H1 (cell line): ENCODE measurements at regions of chr3 and their contacts with region 1.

Region 1: GRCh38 chr3:141050576-141051442 is at the start of gene SPSB4:
- DNase-seq: peak; percentile 63 to 90
- H3K4me3 ChIP-seq: peak within 1 kb of the TSS; percentile 64 to 92 (median 84)
- H3K27ac ChIP-seq: peak within 1 kb of the TSS; percentile 42; the same call in 1 of the 2 replicates
- H3K4me1 ChIP-seq: peaks cover 0 to 18% (median 5%) of the 10 kb centered on the region in 4 experiments; a peak in 5 of 7 replicates
- H3K27me3 ChIP-seq: peaks cover 0 to 36% (median 12%) of the 10 kb centered on the region in 4 experiments; a peak in 5 of 7 replicates
- CTCF ChIP-seq: peak; percentile 38 to 69 (median 58)
- EP300 ChIP-seq: no peak
- POLR2A ChIP-seq: no peak; a peak in 1 of 3 replicates
- RAD21 ChIP-seq: peak; percentile 37 to 73; a peak in 3 of 4 replicates
- total RNA-seq, gene SPSB4: 17.2 and 18.1 TPM in 2 replicates

Region 2: DNA sequence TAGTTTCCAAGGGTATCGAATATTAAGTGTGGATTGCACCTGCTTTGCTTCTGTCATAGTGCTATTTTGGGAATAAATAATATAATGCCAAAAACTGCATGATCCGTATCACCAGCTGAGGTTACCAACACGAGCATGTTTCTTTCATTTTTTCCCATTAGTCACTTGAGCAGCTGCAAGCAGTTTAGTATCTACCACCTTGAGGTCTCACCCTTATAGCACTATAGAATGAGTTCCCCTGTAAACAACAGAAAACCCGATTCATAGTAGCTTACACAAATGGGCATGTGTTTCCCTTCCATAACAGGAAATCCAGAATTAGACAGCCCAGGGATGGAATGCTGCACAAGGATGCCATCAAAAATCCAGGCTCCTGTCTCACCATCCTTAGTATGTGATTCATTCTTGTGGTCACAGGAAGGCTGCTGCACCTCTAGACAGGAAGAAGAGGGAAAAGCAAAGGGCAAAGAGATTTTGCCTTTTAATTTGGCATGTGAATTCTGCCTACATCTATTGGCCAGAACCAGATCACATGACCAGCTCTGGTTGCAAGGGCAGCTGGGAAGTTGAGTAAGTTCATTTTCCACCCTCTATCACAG is 200.5 kb before region 1 on chr3:
- CTCF ChIA-PET with region 1: no interaction called
- POLR2A ChIA-PET with region 1: no interaction called
- DNase-seq: no peak
- H3K4me3 ChIP-seq: no peak overlapping the region
- H3K27ac ChIP-seq: no peak overlapping the region
- H3K4me1 ChIP-seq: no peaks in the 10 kb centered on the region
- H3K27me3 ChIP-seq: peaks cover 0 to 2% (median 0%) of the 10 kb centered on the region in 4 experiments; a peak in 1 of 7 replicates
- CTCF ChIP-seq: no peak
- EP300 ChIP-seq: no peak
- POLR2A ChIP-seq: no peak
- RAD21 ChIP-seq: no peak

Region 3: DNA sequence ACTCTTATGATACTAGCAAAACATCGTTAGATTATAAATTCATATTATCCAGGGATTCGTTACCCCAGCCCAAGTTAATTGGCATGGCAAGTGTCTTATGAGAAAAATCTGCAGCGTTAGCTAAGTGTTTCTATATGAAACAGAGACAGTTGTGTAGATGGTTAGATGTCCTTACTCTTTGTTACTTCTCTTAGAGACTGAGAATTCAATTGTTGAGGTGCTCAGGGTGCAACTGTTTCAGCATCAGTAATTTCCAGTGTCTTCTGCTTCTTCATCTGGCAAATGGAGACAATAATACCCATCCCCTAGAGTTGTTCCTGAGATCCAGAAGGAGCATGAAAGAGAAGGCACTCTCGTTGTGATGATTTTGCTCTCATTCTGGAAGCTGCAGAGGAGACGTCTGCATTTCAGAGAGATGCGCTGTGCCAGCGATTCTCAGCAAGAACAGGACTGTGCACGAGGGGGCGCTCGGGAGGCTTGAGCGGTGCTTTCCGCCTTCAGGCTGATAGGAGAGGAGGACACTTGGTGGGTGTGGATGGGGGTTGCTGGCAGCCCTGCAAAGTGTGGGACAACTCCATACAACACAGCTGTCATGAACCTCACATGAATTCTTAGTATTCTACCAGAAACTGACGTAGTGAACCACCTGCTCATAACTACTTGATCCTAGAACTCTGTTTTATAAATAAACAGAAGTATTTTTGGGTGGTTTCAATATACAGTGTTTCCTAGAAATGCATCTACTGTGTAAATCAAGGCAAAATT is 39.4 kb before region 1 on chr3:
- CTCF ChIA-PET with region 1: interaction called, 123 read pairs
- POLR2A ChIA-PET with region 1: interaction called, 3 read pairs
- DNase-seq: peak; percentile 66 to 98
- H3K4me3 ChIP-seq: no peak overlapping the region
- H3K27ac ChIP-seq: no peak overlapping the region
- H3K4me1 ChIP-seq: peaks cover 0 to 11% (median 0%) of the 10 kb centered on the region in 4 experiments; a peak in 2 of 7 replicates
- H3K27me3 ChIP-seq: peaks cover 0 to 2% (median 0%) of the 10 kb centered on the region in 4 experiments; a peak in 1 of 7 replicates
- CTCF ChIP-seq: peak; percentile 91 to 98 (median 96)
- EP300 ChIP-seq: no peak
- POLR2A ChIP-seq: no peak
- RAD21 ChIP-seq: peak; percentile 91 to 94

Region 4: DNA sequence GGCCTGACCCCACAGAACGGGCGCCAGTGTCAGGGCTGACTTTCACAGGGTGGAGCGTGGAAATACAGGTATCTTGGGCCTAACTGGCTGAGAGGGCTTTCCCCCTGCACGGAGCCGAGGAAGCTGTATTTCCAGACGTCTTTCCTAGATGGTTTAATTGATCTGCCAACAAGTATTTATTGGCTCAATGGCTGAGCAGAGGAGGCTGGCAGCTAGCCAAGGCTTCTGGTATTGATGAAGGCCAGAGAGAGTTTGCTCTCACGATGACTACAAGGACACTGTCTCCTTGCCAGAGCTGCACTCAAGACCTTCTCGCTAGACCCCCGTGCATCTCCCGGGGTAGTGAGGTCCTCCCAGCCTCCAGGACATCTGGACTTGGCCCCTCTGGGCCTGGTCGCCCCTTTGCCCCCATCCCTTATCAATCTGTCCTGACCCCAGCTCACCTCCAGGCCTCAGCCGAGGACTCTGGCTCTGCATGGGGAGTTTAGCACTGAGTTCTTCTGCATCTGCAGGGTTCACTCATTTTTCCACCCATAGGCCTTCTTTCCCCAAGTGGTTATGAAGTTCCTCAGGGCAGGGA is 21.0 kb after region 1 on chr3:
- CTCF ChIA-PET with region 1: interaction called, 333 read pairs
- POLR2A ChIA-PET with region 1: interaction called, 22 read pairs
- DNase-seq: no peak
- H3K4me3 ChIP-seq: peak overlapping the region in 3 of 4 experiments; percentile 0 to 6 (median 2); a peak in 2 of 8 replicates
- H3K27ac ChIP-seq: no peak overlapping the region
- H3K4me1 ChIP-seq: peaks cover 35 to 60% (median 49%) of the 10 kb centered on the region in 4 experiments
- H3K27me3 ChIP-seq: peaks cover 0 to 18% (median 8%) of the 10 kb centered on the region in 4 experiments; a peak in 4 of 7 replicates
- CTCF ChIP-seq: no peak
- EP300 ChIP-seq: no peak
- POLR2A ChIP-seq: no peak
- RAD21 ChIP-seq: no peak

Region 5: GRCh38 chr3:141094790-141095545 is 44.2 kb after region 1 on chr3:
- CTCF ChIA-PET with region 1: interaction called, 333 read pairs
- POLR2A ChIA-PET with region 1: interaction called, 4 read pairs
- DNase-seq: no peak
- H3K4me3 ChIP-seq: no peak overlapping the region
- H3K27ac ChIP-seq: no peak overlapping the region
- H3K4me1 ChIP-seq: peaks cover 4 to 22% (median 9%) of the 10 kb centered on the region in 4 experiments
- H3K27me3 ChIP-seq: no peaks in the 10 kb centered on the region
- CTCF ChIP-seq: no peak
- EP300 ChIP-seq: no peak
- POLR2A ChIP-seq: no peak
- RAD21 ChIP-seq: no peak

Region 6: DNA sequence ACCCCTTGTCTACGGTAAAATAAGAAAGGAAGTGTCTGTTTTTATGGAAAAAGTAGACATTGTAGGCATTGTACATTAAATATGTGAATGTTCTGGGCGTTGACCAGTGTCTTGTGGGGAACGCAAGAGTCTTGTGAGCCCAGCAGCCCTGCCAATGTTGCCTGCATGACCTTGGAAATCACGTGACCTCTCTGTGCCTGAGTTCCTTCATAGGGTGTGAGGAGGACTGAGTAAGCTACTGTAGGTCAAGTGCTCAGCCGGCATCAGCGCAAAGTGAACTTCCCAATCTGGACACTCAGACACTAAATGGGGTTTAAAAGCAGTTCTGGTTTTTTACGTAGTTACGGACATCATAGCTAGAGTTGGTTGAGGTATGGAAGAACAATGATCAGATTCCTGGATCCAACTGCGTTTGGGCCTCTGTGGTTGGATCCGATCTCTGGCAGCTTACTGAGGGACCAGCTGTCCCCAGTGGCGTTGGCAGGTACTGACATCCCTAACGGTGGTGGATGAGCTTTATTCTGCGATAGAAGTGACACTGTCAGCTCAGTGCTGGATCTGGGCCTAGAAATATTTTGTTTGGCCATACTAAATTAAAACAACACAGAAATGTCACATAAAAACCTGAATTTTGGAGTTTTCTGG is 64.1 kb after region 1 on chr3:
- CTCF ChIA-PET with region 1: interaction called, 119 read pairs
- POLR2A ChIA-PET with region 1: interaction called, 7 read pairs
- DNase-seq: peak in 1 of 2 experiments; percentile 65
- H3K4me3 ChIP-seq: no peak overlapping the region
- H3K27ac ChIP-seq: no peak overlapping the region
- H3K4me1 ChIP-seq: no peaks in the 10 kb centered on the region
- H3K27me3 ChIP-seq: no peaks in the 10 kb centered on the region
- CTCF ChIP-seq: peak; percentile 65 to 81 (median 80)
- EP300 ChIP-seq: no peak
- POLR2A ChIP-seq: no peak
- RAD21 ChIP-seq: peak; percentile 55 to 70

Region 7: DNA sequence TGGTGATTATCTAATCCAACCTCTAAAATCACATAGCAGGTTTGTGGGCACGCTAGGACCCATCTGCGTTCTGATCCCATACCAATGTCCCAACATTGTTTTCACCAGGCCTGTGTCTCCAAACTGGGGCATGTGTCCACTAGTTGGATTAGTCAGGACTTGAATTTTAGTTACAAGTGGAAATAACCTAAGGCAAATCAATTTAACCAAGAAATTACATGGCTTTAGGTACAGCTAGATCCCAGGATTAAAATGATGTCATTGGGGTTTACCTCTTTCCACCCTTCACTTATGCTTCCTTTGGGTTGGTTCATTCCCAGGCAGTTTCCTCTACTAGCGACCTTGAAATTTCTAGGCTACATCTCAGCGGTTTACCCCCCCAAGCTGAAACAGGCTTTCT is 133.6 kb after region 1 on chr3:
- CTCF ChIA-PET with region 1: interaction called, 19 read pairs
- POLR2A ChIA-PET with region 1: no interaction called
- DNase-seq: no peak
- H3K4me3 ChIP-seq: no peak overlapping the region
- H3K27ac ChIP-seq: no peak overlapping the region
- H3K4me1 ChIP-seq: no peaks in the 10 kb centered on the region
- H3K27me3 ChIP-seq: no peaks in the 10 kb centered on the region
- CTCF ChIP-seq: no peak
- EP300 ChIP-seq: no peak
- POLR2A ChIP-seq: no peak
- RAD21 ChIP-seq: no peak